Activated CD4-positive, alpha-beta memory T cell treated with anti-CD3 and anti-CD28 coated beads, Interleukin-2, amount 10 ng/mL, durations not matched to agents 7 days and 5 days (primary cell): ENCODE measurements at regions of chr14 and their contacts with region 1.

Region 1: GRCh38 chr14:73058224-73058921 is at the start of gene RBM25:
- DNase-seq: peak; percentile 96
- H3K4me3 Mint-ChIP-seq: no peak within 1 kb of the TSS
- H3K27ac Mint-ChIP-seq: no peak within 1 kb of the TSS
- H3K4me1 Mint-ChIP-seq: peaks cover 39% of the 10 kb centered on the region
- H3K27me3 Mint-ChIP-seq: no peaks in the 10 kb centered on the region
- total RNA-seq, gene RBM25: 86.9 TPM

Region 2: GRCh38 chr14:73026845-73027542 is 31.4 kb before region 1 on chr14 and contains the start of gene ZFYVE1:
- CTCF ChIA-PET with region 1: interaction called, 8 read pairs
- POLR2A ChIA-PET with region 1: interaction called, 65 read pairs
- DNase-seq: peak; percentile 94
- H3K4me3 Mint-ChIP-seq: peak within 1 kb of the TSS; percentile 92
- H3K27ac Mint-ChIP-seq: peak within 1 kb of the TSS; percentile 80
- H3K4me1 Mint-ChIP-seq: peaks cover 47% of the 10 kb centered on the region
- H3K27me3 Mint-ChIP-seq: no peaks in the 10 kb centered on the region
- total RNA-seq, gene ZFYVE1: 17.8 to 18.4 TPM

Region 3: DNA sequence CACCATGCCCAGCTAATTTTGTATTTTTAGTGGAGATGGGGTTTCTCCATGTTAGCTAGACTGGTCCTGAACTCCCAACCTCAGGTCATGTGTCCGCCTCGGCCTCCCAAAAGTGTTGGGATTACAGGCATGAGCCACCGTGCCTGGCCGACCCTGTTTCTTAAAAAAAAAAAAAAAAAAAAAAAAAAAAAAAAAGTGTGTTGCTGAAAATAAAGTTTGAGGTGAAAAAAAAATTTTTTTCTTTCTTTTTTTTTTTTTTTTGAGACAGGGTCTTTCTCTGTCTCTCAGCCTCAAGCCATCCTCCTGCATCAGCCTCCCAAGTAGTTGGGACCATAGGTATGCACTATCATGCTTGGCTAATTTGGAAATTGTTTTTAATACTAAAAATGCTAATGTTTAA is 11.2 kb after region 1 on chr14:
- CTCF ChIA-PET with region 1: no interaction called
- POLR2A ChIA-PET with region 1: interaction called, 11 read pairs
- DNase-seq: no peak
- H3K4me3 Mint-ChIP-seq: no peak overlapping the region
- H3K27ac Mint-ChIP-seq: no peak overlapping the region
- H3K4me1 Mint-ChIP-seq: peaks cover 18% of the 10 kb centered on the region
- H3K27me3 Mint-ChIP-seq: no peaks in the 10 kb centered on the region

Region 4: DNA sequence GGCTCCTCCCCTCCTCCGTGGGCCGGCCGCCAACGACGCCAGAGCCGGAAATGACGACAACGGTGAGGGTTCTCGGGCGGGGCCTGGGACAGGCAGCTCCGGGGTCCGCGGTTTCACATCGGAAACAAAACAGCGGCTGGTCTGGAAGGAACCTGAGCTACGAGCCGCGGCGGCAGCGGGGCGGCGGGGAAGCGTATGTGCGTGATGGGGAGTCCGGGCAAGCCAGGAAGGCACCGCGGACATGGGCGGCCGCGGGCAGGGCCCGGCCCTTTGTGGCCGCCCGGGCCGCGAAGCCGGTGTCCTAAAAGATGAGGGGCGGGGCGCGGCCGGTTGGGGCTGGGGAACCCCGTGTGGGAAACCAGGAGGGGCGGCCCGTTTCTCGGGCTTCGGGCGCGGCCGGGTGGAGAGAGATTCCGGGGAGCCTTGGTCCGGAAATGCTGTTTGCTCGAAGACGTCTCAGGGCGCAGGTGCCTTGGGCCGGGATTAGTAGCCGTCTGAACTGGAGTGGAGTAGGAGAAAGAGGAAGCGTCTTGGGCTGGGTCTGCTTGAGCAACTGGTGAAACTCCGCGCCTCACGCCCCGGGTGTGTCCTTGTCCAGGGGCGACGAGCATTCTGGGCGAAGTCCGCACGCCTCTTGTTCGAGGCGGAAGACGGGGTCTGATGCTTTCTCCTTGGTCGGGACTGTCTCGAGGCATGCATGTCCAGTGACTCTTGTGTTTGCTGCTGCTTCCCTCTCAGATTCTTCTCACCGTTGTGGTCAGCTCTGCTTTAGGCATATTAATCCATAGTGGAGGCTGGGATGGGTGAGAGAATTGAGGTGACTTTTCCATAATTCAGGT is 78.2 kb after region 1 on chr14 and contains the start of gene PSEN1:
- CTCF ChIA-PET with region 1: interaction called, 3 read pairs
- POLR2A ChIA-PET with region 1: interaction called, 36 read pairs
- DNase-seq: peak; percentile 99
- H3K4me3 Mint-ChIP-seq: peak within 1 kb of the TSS; percentile 85
- H3K27ac Mint-ChIP-seq: peak within 1 kb of the TSS; percentile 97
- H3K4me1 Mint-ChIP-seq: peaks cover 32% of the 10 kb centered on the region
- H3K27me3 Mint-ChIP-seq: no peaks in the 10 kb centered on the region
- total RNA-seq, gene PSEN1: 41.8 to 44.5 TPM

Region 5: DNA sequence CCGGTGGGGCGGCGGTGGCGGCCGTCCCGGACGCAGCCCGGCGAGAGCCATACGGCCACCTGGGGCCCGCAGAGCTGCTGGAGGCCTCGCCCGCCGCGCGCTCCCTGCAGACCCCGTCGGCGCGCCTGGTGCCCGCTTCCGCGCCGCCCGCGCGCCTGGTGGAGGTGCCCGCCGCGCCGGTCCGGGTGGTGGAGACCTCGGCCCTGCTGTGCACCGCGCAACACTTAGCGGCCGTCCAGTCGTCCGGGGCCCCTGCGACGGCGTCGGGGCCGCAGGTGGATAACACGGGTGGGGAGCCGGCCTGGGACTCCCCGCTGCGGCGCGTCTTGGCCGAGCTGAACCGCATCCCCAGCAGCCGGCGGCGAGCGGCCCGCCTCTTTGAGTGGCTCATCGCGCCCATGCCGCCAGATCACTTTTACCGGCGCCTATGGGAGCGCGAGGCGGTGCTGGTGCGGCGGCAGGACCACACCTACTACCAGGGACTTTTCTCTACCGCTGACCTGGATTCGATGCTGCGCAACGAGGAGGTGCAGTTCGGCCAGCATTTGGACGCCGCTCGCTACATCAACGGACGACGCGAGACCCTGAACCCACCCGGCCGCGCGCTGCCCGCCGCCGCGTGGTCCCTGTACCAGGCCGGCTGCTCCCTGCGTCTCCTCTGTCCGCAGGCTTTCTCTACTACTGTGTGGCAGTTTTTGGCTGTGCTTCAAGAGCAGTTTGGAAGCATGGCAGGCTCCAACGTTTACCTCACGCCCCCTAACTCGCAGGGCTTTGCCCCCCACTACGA is 433.1 kb after region 1 on chr14:
- CTCF ChIA-PET with region 1: no interaction called
- POLR2A ChIA-PET with region 1: interaction called, 15 read pairs
- DNase-seq: peak; percentile 79
- H3K4me3 Mint-ChIP-seq: peak overlapping the region; percentile 81
- H3K27ac Mint-ChIP-seq: peak overlapping the region; percentile 74
- H3K4me1 Mint-ChIP-seq: peaks cover 45% of the 10 kb centered on the region
- H3K27me3 Mint-ChIP-seq: peaks cover 12% of the 10 kb centered on the region